Prostate gland (tissue), 2 donors: ENCODE measurements at regions of chr5 and their contacts with region 1.

Region 1: GRCh38 chr5:102583276-102584124 is 84.7 kb upstream of the SLCO6A1 start:
- DNase-seq: no peak
- H3K4me3 ChIP-seq: no peak overlapping the region
- H3K27ac ChIP-seq: no peak overlapping the region
- H3K4me1 ChIP-seq: no peaks in the 10 kb centered on the region
- H3K27me3 ChIP-seq: no peaks in the 10 kb centered on the region
- CTCF ChIP-seq: peak in 3 of 4 experiments; percentile 36 to 52 (median 38)
- POLR2A ChIP-seq: no peak

Region 2: GRCh38 chr5:102670224-102670836 is 86.8 kb after region 1 on chr5:
- intact Hi-C with region 1: loop called (anchors 5 kb)
- DNase-seq: no peak
- H3K4me3 ChIP-seq: no peak overlapping the region
- H3K27ac ChIP-seq: no peak overlapping the region
- H3K4me1 ChIP-seq: no peaks in the 10 kb centered on the region
- H3K27me3 ChIP-seq: no peaks in the 10 kb centered on the region
- CTCF ChIP-seq: peak in 1 of 4 experiments; percentile 18
- POLR2A ChIP-seq: no peak

Region 3: DNA sequence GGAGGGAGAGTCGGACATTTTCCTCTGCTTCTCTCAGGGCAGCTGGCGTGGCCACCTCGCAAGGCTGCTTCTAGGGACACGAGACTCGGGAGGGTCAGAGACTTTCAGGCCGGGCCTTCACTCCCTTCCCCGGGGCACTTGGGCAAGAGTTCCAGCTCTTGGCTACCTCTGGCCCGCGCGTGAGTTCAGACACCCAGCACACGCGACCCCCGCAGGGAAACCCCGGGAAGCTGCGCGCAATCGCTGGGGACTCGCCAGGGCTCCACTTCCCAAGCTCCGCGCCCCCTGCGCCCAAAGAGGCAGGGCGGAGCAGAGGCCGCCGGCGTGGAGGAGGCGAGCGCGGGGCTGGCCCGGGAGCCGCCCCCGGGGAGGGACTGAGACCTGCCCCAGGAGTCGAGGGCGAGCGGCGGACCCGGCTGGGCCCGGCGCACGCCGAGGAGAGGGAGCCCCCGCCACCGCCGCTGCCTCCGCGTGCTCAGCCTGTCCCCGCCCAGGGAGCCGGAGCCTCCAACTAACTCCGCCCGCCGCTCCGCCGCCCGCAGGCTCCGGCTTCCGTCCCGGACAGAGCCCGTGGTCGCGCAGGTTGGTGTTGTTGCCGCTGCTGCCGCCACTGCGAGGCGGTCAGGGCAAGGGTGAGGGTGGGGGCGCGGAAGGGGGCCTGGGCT is 171.4 kb after region 1 on chr5 and contains the start of gene PAM:
- intact Hi-C with region 1: loop called (anchors 10 kb)
- DNase-seq: peak; percentile 55
- H3K4me3 ChIP-seq: peak within 1 kb of the TSS; percentile 70 to 71
- H3K27ac ChIP-seq: peak within 1 kb of the TSS; percentile 56 to 64
- H3K4me1 ChIP-seq: no peaks in the 10 kb centered on the region
- H3K27me3 ChIP-seq: no peaks in the 10 kb centered on the region
- CTCF ChIP-seq: no peak
- POLR2A ChIP-seq: peak; percentile 48
- total RNA-seq, gene PAM: 76.8 to 171 TPM

Region 4: GRCh38 chr5:102778478-102778877 is 195.0 kb after region 1 on chr5:
- intact Hi-C with region 1: no loop called
- DNase-seq: no peak
- H3K4me3 ChIP-seq: no peak overlapping the region
- H3K27ac ChIP-seq: no peak overlapping the region
- H3K4me1 ChIP-seq: no peaks in the 10 kb centered on the region
- H3K27me3 ChIP-seq: no peaks in the 10 kb centered on the region
- CTCF ChIP-seq: no peak
- POLR2A ChIP-seq: no peak

Region 5: GRCh38 chr5:102971697-102972293 is 388.3 kb after region 1 on chr5:
- intact Hi-C with region 1: loop called (anchors 5 kb)
- DNase-seq: no peak
- H3K4me3 ChIP-seq: no peak overlapping the region
- H3K27ac ChIP-seq: no peak overlapping the region
- H3K4me1 ChIP-seq: no peaks in the 10 kb centered on the region
- H3K27me3 ChIP-seq: no peaks in the 10 kb centered on the region
- CTCF ChIP-seq: peak in 3 of 4 experiments; percentile 37 to 47 (median 43)
- POLR2A ChIP-seq: no peak

Region 6: DNA sequence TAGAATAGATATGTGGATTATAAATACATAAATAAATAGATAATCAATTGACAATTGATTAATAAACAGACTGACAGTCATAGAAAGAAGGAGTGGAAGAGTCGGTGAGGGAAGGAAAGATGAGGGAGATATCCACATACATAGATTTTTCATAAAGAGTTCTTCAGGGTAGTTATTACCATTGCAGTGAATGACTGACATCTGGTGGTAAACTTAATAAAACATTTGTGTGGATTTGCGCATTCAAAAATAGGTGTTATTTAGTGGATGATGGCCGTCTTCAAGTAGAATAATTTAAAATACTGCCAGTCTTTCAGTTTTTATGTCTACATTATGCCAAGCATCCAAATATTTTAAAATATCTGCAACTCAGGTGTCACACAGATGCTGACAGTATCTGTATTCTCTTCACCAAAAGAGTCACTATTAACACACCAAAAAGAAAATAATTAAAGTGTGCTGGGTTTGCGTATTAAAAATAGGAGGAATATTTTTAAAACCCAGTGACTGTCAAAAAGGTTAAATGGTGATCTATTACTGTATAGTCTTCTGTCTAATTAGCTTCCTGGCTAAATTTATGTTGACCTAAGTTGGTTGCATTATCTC is 457.7 kb after region 1 on chr5:
- intact Hi-C with region 1: loop called (anchors 5 kb)
- DNase-seq: no peak
- H3K4me3 ChIP-seq: no peak overlapping the region
- H3K27ac ChIP-seq: no peak overlapping the region
- H3K4me1 ChIP-seq: no peaks in the 10 kb centered on the region
- H3K27me3 ChIP-seq: no peaks in the 10 kb centered on the region
- CTCF ChIP-seq: peak in 3 of 4 experiments; percentile 43 to 62 (median 53)
- POLR2A ChIP-seq: no peak

Region 7: GRCh38 chr5:103119765-103120606 is 536.5 kb after region 1 on chr5 and contains the starts of genes GIN1 and PPIP5K2:
- intact Hi-C with region 1: loop called (anchors 10 kb)
- DNase-seq: peak; percentile 96
- H3K4me3 ChIP-seq: peak within 1 kb of the TSS; percentile 61 to 65
- H3K27ac ChIP-seq: peak within 1 kb of the TSS; percentile 85 to 87
- H3K4me1 ChIP-seq: no peaks in the 10 kb centered on the region
- H3K27me3 ChIP-seq: no peaks in the 10 kb centered on the region
- CTCF ChIP-seq: peak in 1 of 4 experiments; percentile 16
- POLR2A ChIP-seq: peak; percentile 76
- total RNA-seq, gene GIN1: 7.2 to 8.0 TPM
- total RNA-seq, gene PPIP5K2: 23.9 to 24.9 TPM